Activated B cell treated with CpG ODN at 0.5 μM for 24 hours (primary cell): ENCODE measurements at regions of chr22 and their contacts with region 1.

Region 1: GRCh38 chr22:18057568-18058209 is 20.1 kb upstream of the PEX26 start:
- DNase-seq: peak; percentile 53
- ATAC-seq: peak; percentile 83
- H3K4me3 Mint-ChIP-seq: peak overlapping the region; percentile 71
- H3K27ac Mint-ChIP-seq: peak overlapping the region; percentile 97
- H3K4me1 Mint-ChIP-seq: peaks cover 49% of the 10 kb centered on the region
- H3K27me3 Mint-ChIP-seq: no peaks in the 10 kb centered on the region
- CTCF ChIP-seq: no peak

Region 2: DNA sequence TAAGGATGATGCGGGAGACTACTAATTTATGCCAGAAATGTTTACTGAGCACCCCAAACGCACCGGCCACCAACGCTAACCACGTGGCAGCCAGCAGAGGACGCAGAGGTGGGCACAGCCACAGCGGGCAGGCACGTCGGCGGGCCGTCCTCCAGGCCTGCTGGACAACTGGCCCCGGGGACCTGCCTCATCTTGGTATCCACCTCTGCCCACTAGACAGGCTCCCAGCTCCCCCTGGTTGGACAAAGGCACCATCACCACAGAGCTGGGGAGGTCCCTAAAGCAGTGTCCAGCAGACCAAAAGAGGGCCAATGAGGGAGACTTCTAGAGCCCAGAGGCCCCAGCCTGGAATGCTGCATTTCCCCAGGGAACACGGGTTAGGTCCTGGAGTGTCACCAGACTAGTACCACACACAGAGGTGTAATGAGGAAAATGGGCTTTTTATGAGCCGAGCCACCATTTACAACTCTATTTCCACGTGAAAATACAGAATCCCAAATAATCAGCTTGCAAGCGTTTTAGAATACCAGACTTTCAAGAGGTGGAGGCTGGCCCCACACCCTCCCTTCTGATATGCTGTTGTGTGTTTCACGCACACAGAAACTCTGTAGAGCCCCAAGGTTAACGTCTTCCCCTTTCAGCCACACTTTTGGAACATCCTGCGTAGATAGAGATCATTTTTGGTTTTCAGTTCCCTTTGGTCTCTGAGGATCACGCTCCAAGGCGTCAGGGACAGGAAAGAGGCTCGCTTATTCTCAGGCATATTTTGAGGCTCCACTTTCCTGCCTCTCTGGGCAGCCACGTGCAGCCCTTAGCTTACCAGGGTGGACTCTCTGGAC is 259.7 kb before region 1 on chr22:
- CTCF ChIA-PET with region 1: no interaction called
- POLR2A ChIA-PET with region 1: interaction called, 10 read pairs
- intact Hi-C with region 1: loop called (anchors 1 kb)
- DNase-seq: peak; percentile 41
- ATAC-seq: peak; percentile 62
- H3K4me3 Mint-ChIP-seq: peak overlapping the region; percentile 49
- H3K27ac Mint-ChIP-seq: peak overlapping the region; percentile 99
- H3K4me1 Mint-ChIP-seq: peaks cover 87% of the 10 kb centered on the region
- H3K27me3 Mint-ChIP-seq: no peaks in the 10 kb centered on the region
- CTCF ChIP-seq: no peak

Region 3: GRCh38 chr22:17964643-17965042 is 93.0 kb before region 1 on chr22:
- CTCF ChIA-PET with region 1: no interaction called
- POLR2A ChIA-PET with region 1: interaction called, 14 read pairs
- intact Hi-C with region 1: no loop called
- DNase-seq: peak; percentile 37
- ATAC-seq: peak; percentile 89
- H3K4me3 Mint-ChIP-seq: peak overlapping the region; percentile 56
- H3K27ac Mint-ChIP-seq: peak overlapping the region; percentile 88
- H3K4me1 Mint-ChIP-seq: peaks cover 84% of the 10 kb centered on the region
- H3K27me3 Mint-ChIP-seq: no peaks in the 10 kb centered on the region
- CTCF ChIP-seq: no peak

Region 4: DNA sequence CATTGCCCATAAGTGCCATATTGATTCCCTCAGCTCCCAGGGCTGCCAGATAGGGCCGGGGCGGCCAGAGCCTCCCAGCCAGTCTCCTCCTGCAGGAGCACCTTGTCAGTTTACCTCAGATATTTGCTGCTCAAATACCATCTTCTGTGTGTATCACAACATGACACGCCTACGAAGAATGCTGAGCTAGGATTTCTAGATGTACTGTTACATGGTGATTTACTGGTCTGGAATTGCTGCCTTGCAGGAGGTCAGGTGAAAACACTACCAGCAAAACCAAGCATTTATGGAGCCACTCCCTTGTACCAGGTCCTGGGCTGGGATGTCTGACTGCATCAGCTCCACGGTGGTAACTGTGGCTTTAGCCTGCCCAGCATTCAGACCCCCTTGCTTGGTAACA is 45.2 kb before region 1 on chr22:
- CTCF ChIA-PET with region 1: interaction called, 3 read pairs
- POLR2A ChIA-PET with region 1: interaction called, 9 read pairs
- intact Hi-C with region 1: loop called (anchors 2 kb)
- DNase-seq: no peak
- ATAC-seq: no peak
- H3K4me3 Mint-ChIP-seq: no peak overlapping the region
- H3K27ac Mint-ChIP-seq: no peak overlapping the region
- H3K4me1 Mint-ChIP-seq: peaks cover 47% of the 10 kb centered on the region
- H3K27me3 Mint-ChIP-seq: no peaks in the 10 kb centered on the region
- CTCF ChIP-seq: no peak

Region 5: DNA sequence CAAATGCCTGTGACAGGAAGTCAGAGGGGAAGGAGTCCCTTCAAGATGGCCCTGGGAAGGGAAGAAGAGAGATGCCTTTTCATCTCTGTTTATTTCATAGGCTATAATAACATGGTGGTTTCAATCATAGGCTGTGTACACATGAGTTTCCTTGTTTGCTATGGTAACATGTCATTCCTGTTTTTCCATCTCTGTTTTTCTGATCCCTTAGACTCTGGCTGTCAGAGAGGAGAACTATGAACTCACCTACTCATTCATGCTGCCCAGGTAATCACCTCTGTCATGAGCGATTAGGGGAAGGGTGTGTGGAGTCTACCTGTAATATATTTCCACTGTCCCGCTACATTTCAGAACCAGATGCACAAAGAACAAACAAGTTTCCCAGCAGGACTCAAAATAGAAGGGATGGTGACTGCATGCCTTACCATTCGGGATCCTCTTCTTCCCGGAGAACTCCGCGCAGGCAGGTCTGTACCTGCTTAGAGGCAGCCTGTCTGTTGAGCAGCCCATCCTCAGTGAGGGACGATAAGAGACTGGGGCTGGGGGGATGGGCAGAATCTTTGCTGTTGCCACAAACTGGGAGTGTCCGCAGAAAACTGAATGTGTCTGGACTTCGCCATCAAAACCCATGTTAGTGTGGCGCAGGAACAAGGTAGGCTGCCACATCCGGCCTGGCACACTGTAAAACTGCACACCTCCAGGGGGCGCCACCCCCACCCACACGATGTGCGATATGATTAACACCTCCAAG is 13.0 kb after region 1 on chr22:
- CTCF ChIA-PET with region 1: interaction called, 44 read pairs
- POLR2A ChIA-PET with region 1: interaction called, 50 read pairs
- intact Hi-C with region 1: loop called (anchors 1 kb)
- DNase-seq: no peak
- ATAC-seq: no peak
- H3K4me3 Mint-ChIP-seq: no peak overlapping the region
- H3K27ac Mint-ChIP-seq: no peak overlapping the region
- H3K4me1 Mint-ChIP-seq: peaks cover 71% of the 10 kb centered on the region
- H3K27me3 Mint-ChIP-seq: no peaks in the 10 kb centered on the region
- CTCF ChIP-seq: no peak